ENCODE measurements at regions of chr16 and their contacts with region 1.

Region 1: DNA sequence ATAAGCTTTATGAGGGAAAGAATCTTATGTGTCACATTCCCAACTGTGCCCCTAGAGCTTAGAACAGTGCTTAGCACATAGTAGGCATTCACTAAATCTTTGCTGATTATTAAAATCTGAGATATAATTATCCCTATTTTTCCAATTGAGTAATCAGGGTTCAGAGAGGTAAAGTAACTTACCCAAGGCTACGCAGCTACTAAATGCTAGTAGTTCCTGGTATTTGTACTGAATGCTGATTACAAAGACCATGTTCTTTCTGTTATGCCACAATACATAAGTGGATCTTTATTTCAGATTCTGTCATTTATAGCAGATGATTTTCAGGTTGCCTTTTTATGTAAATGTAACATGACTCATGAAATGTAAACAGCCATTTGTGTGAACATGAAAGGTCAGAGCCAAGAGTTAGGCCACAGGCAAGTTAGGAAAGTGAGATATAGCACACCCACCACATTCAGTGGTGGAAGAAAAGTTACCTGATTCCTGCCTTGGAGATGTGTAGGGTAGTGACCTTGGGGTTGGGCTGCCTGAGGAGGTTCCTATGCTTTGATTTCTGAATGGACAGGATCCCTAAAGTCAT is 77.2 kb downstream of the FTO start:
- DNase-seq: peak; percentile 78
- H3K4me3 ChIP-seq: no peak overlapping the region
- H3K27ac ChIP-seq: peak overlapping the region; percentile 51
- H3K4me1 ChIP-seq: peaks cover 70% of the 10 kb centered on the region
- H3K27me3 ChIP-seq: no peaks in the 10 kb centered on the region
- CTCF ChIP-seq: no peak

Region 2: DNA sequence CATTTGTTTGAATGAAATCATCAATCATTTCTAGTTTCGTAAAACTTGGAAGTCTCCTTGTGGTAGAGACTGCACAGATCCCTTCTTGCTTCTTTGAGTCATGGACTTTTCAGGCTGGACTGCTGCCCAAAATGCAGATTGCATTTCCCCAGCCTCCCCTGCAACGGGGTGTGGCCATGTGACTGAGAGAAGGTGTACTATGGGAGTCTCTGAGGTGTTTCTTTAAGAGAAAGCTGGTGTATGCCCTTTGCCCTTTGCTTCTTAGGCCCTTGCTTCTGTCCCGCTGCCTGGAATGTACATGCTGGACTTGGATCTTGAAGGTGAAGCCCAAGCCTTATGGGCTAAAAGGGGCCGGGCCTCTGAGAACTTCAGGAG is 25.6 kb before region 1 on chr16:
- CTCF ChIA-PET with region 1: no interaction called
- dilution Hi-C with region 1: no loop called
- in situ Hi-C with region 1: no loop called
- intact Hi-C with region 1: no loop called
- DNase-seq: peak; percentile 92
- H3K4me3 ChIP-seq: no peak overlapping the region
- H3K27ac ChIP-seq: peak overlapping the region; percentile 48
- H3K4me1 ChIP-seq: peaks cover 15% of the 10 kb centered on the region
- H3K27me3 ChIP-seq: no peaks in the 10 kb centered on the region
- CTCF ChIP-seq: peak in 1 of 2 donors; percentile 18

Region 3: GRCh38 chr16:53817117-53817755 is 36.1 kb after region 1 on chr16:
- CTCF ChIA-PET with region 1: interaction called, 7 read pairs
- dilution Hi-C with region 1: no loop called
- in situ Hi-C with region 1: loop called in 1 of 2 experiments (anchors 5 kb)
- intact Hi-C with region 1: loop called (anchors 5 kb)
- DNase-seq: peak; percentile 87
- H3K4me3 ChIP-seq: no peak overlapping the region
- H3K27ac ChIP-seq: peak overlapping the region; percentile 87
- H3K4me1 ChIP-seq: peaks cover 40% of the 10 kb centered on the region
- H3K27me3 ChIP-seq: no peaks in the 10 kb centered on the region
- CTCF ChIP-seq: no peak

Region 4: GRCh38 chr16:53892155-53892554 is 111.0 kb after region 1 on chr16:
- CTCF ChIA-PET with region 1: interaction called, 18 read pairs
- dilution Hi-C with region 1: no loop called
- in situ Hi-C with region 1: loop called (anchors 10 kb)
- intact Hi-C with region 1: no loop called
- DNase-seq: peak; percentile 51
- H3K4me3 ChIP-seq: no peak overlapping the region
- H3K27ac ChIP-seq: peak overlapping the region; percentile 5
- H3K4me1 ChIP-seq: peaks cover 26% of the 10 kb centered on the region
- H3K27me3 ChIP-seq: no peaks in the 10 kb centered on the region
- CTCF ChIP-seq: peak; percentile 53 to 69

Region 5: GRCh38 chr16:53904533-53904932 is 123.4 kb after region 1 on chr16:
- CTCF ChIA-PET with region 1: no interaction called
- dilution Hi-C with region 1: no loop called
- in situ Hi-C with region 1: no loop called
- intact Hi-C with region 1: no loop called
- DNase-seq: no peak
- H3K4me3 ChIP-seq: no peak overlapping the region
- H3K27ac ChIP-seq: no peak overlapping the region
- H3K4me1 ChIP-seq: no peaks in the 10 kb centered on the region
- H3K27me3 ChIP-seq: no peaks in the 10 kb centered on the region
- CTCF ChIP-seq: no peak

Region 6: DNA sequence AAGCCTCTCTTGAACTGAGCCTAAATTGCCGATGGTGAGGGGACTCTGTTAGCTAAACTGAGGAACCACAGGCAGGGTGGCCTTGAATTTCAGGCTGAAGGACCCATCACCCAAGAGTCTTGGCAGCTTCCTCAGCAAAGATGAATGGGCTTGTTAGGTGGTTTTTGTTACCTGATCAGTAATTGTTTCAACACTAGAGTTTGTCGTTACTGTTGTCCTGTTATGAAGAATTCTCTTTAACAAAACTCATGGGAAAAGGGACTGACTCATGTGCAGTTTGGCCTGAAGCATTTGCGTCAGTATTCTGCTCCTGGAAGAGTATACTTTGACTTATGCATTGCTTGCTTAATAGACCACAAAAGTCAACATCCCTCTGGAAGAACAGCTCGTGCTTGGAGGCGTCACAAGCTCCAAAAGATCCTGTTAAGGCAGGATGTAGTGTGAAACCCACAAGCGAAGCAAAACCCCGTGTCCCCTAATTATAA is 299.5 kb after region 1 on chr16:
- CTCF ChIA-PET with region 1: no interaction called
- dilution Hi-C with region 1: no loop called
- in situ Hi-C with region 1: no loop called
- intact Hi-C with region 1: loop called (anchors 5 kb)
- DNase-seq: peak; percentile 99
- H3K4me3 ChIP-seq: no peak overlapping the region
- H3K27ac ChIP-seq: peak overlapping the region; percentile 84
- H3K4me1 ChIP-seq: peaks cover 28% of the 10 kb centered on the region
- H3K27me3 ChIP-seq: no peaks in the 10 kb centered on the region
- CTCF ChIP-seq: no peak

Measured in mammary epithelial cell (primary cell).